Ascending aorta (tissue), 2 donors: ENCODE measurements at regions of chr9 and their contacts with region 1.

Region 1: DNA sequence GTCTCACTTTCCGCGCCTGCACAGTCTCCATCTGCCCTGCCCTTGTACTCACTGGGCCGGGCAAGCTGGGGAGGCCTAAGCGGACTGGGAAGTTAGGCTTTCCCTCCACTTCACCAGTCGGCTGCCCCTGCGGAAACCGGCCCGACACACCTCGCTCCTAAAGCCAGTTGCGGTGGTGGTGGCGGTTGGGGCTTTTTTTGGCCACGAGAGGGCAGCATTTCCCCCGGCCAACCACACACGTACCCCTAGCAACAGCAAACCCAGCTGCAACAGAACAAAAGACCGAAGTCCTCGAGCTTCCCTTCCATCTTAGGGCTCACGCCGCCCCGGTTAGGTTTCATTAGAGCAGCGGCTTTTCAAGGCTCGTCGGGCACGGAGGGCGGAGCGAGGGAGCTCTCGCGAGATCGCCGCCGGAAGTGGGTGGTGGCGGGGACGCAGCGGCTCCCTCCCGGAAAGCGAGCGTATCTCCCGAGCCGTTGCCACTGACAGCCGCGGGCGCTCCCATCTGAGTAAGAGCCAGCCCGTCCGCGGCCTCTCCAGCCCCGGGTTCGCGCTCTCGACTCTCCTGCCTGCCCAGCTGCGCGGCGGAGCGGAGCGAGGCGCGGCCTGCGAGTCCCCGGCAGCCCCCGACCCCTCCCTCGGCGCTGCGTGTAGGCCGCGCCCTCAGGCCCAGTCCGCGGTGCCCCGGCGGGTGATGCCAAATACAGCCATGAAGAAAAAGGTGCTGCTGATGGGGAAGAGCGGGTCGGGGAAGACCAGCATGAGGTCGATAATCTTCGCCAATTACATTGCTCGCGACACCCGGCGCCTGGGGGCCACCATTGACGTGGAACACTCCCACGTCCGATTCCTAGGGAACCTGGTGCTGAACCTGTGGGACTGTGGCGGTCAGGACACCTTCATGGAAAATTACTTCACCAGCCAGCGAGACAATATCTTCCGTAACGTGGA is at the start of gene RRAGA:
- DNase-seq: peak; percentile 70 to 97
- H3K4me3 ChIP-seq: peak within 1 kb of the TSS; percentile 77 to 89
- H3K27ac ChIP-seq: peak within 1 kb of the TSS; percentile 98
- H3K4me1 ChIP-seq: peaks cover 8 to 14% of the 10 kb centered on the region in 2 donors
- H3K27me3 ChIP-seq: no peaks in the 10 kb centered on the region
- CTCF ChIP-seq: peak; percentile 81 to 87 (median 86)
- total RNA-seq, gene RRAGA: 57.3 TPM

Region 2: DNA sequence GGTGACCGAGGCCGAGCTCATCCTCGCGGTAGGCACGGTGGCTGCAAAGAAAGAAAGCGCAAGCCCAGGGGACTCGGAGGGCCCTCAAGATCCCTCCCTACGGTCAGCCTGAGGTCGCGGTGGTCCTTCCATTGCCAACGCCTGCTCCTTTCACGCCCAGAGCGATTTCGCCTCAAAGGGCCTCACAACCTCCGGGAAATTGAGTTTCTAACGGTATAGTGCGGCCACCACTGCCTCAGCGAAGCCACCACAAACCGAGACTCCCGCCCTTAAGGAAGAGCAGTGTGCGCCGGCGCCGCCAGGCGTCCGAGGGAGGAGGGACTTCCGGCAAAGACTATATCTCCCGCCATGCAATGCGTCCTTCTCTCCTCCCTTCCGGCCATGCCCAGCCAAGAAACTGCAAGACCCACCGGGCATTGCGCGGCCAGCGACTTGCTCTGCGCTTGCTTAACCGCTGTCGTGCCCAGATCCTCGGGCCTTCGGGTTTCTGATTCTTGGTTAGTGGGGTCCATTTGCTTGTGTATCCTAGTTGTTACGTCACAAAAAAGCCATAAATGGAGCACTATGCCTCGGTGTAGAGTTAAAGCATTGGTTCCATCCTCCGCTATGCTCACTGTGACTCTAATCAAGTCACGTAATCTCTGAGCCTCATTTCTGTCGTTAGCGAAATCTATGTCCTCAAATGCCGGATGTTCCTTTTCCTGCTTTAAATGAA is 53.5 kb after region 1 on chr9 and contains the start of gene HAUS6:
- intact Hi-C with region 1: loop called (anchors 2 kb)
- DNase-seq: peak; percentile 83 to 99
- H3K4me3 ChIP-seq: peak within 1 kb of the TSS; percentile 67 to 74
- H3K27ac ChIP-seq: peak within 1 kb of the TSS; percentile 85 to 87
- H3K4me1 ChIP-seq: peaks cover 10 to 11% of the 10 kb centered on the region in 2 donors
- H3K27me3 ChIP-seq: no peaks in the 10 kb centered on the region
- CTCF ChIP-seq: peak in 2 of 3 experiments; percentile 41 to 69
- total RNA-seq, gene HAUS6: 3.4 TPM

Region 3: DNA sequence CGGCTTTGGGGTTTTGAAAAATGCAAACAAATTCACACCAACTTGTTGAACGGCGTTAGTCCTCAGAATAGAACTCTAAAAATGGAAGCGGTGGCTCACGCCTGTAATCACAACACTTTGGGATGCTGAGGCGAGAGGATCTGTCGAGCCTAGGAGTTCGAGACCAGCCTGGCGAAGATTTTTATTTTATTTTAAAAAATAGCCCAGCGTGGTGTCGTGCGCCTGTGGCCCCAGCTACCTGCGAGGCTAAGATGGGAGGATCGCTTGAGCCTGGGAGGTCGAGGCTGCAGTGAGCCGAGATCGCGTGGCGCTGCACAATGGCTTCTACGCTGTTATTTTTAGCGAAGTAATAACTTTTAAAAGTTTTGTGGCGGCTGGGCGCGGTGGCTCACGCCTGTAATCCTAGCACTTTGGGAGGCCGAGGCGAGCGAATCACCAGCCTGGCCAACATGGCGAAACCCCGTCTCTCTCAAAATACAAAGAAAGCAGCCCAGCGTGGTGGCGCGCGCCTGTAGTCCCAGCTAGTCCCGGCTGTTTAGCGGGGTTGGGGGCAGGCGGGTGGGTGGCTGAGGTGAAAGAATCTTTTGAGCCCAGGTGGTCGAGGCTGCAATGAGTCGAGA is 78.8 kb after region 1 on chr9:
- intact Hi-C with region 1: loop called (anchors 1 kb)
- DNase-seq: peak in 1 of 2 donors; percentile 72
- H3K4me3 ChIP-seq: peak overlapping the region; percentile 79 to 85
- H3K27ac ChIP-seq: peak overlapping the region; percentile 96 to 97
- H3K4me1 ChIP-seq: peaks cover 10 to 11% of the 10 kb centered on the region in 2 donors
- H3K27me3 ChIP-seq: no peaks in the 10 kb centered on the region
- CTCF ChIP-seq: no peak

Region 4: GRCh38 chr9:19174127-19174912 is 125.1 kb after region 1 on chr9:
- intact Hi-C with region 1: loop called (anchors 1 kb)
- DNase-seq: peak; percentile 51 to 92
- H3K4me3 ChIP-seq: no peak overlapping the region
- H3K27ac ChIP-seq: no peak overlapping the region
- H3K4me1 ChIP-seq: peaks cover 0 to 4% of the 10 kb centered on the region in 2 donors
- H3K27me3 ChIP-seq: no peaks in the 10 kb centered on the region
- CTCF ChIP-seq: peak; percentile 54 to 63 (median 61)

Region 5: DNA sequence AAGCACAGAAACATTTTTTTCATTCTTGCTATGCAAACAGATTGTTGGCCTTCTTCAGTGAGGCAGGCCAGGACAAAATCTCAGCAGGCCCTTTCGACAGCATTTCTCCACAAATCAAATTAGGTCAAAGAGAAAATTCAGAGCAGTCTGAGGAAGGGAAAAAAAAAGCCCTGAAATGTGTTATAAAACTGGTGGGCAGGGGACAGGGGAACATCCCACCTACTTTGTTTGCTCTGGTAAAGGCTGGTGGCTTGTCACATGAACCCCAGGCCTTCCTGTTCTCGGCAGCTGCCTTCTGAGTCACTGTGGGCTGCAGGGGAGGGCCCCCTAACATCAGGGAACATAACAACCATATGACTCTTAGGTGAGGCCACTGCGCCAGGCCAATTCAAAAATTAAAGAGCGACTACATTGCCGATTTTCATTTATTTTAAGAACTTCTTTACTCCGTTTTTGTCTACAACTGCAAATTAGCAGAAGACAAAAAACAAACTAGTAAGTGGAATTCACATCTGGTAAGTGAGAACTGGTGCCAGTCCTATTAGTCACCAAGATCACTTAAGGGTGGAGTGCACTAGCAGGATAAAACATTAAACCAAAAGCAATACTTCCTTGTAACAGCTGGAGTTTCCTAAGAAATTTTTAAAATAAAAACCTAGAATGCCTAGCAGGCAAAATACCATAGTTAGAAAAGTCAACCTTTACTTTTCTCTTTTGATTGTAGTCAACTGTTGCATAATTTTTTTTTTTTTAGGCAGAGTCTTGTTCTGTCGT is 135.1 kb after region 1 on chr9:
- intact Hi-C with region 1: loop called (anchors 1 kb)
- DNase-seq: peak; percentile 90 to 96
- H3K4me3 ChIP-seq: peak overlapping the region in 1 of 2 donors; percentile 10
- H3K27ac ChIP-seq: peak overlapping the region; percentile 93 to 96
- H3K4me1 ChIP-seq: peaks cover 10 to 18% of the 10 kb centered on the region in 2 donors
- H3K27me3 ChIP-seq: no peaks in the 10 kb centered on the region
- CTCF ChIP-seq: no peak

Region 6: DNA sequence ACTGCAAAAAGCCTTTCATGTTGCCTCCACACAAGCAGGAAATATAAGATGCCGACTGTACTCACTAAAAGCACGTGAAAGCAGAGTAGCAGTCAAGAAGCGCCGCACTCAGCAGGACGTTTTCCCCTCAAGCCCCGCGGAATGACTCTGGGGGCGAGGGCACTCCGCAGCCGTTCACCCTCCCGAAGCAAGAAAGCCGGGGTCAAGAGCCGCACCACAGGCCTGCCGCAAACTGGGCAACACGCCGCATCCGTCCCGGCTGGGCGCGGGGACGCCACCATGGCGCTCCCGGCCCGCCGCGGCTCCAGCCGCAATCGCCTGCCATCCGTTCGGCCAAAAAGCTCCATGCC is 330.4 kb after region 1 on chr9:
- intact Hi-C with region 1: loop called (anchors 5 kb)
- DNase-seq: no peak
- H3K4me3 ChIP-seq: peak overlapping the region; percentile 69 to 73
- H3K27ac ChIP-seq: peak overlapping the region; percentile 88 to 91
- H3K4me1 ChIP-seq: peaks cover 0 to 24% of the 10 kb centered on the region in 2 donors
- H3K27me3 ChIP-seq: no peaks in the 10 kb centered on the region
- CTCF ChIP-seq: no peak